Activated CD4-positive, alpha-beta memory T cell treated with anti-CD3 and anti-CD28 coated beads for 36 hours (primary cell): ENCODE measurements at regions of chr22 and their contacts with region 1.

Region 1: DNA sequence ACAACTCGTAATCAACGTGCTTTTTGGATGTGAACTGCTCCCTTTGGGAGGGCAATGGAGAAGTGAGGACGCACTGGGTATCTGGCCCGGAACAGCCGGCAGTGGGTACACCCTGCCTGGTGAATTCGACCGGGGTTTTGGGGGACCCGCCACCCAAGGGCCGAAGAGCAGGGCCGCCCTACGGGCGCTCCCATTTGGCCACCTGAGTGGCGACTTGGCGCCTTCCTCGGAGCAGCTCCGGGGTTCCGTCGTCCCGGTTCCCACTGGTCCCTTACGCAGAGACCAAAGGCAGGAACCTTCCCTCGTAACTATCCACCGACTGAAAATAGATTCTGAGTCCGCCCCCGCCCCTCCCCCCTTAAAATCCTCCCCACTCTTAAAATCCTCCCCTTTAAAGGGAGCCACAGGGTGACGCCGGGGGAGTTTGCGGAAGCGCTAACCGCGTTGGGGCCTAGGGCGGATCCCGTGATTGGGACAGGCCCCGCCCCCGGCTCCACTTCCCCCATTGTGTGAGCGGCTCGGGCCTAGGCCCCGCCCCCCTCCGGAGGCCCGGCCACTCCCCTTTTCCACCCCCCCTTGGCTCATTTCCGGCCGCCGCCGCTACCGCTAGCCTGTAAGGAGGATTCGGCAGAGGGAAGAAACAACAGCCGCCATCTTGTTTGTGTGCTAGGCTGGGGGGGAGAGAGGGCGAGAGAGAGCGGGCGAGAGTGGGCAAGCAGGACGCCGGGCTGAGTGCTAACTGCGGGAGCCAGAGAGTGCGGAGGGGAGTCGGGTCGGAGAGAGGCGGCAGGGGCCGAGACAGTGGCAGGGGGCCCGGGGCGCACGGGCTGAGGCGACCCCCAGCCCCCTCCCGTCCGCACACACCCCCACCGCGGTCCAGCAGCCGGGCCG is 1.0 kb upstream of the EP300 start:
- DNase-seq: peak; percentile 100
- H3K4me3 Mint-ChIP-seq: peak overlapping the region; percentile 93
- H3K27ac Mint-ChIP-seq: peak overlapping the region; percentile 98
- H3K4me1 Mint-ChIP-seq: peaks cover 25% of the 10 kb centered on the region
- H3K27me3 Mint-ChIP-seq: no peaks in the 10 kb centered on the region

Region 2: GRCh38 chr22:40636380-40637182 is 454.8 kb before region 1 on chr22 and contains the start of gene MRTFA:
- CTCF ChIA-PET with region 1: no interaction called
- POLR2A ChIA-PET with region 1: no interaction called
- intact Hi-C with region 1: loop called (anchors 1 kb)
- DNase-seq: peak; percentile 100
- H3K4me3 Mint-ChIP-seq: peak within 1 kb of the TSS; percentile 91
- H3K27ac Mint-ChIP-seq: peak within 1 kb of the TSS; percentile 89
- H3K4me1 Mint-ChIP-seq: peaks cover 40% of the 10 kb centered on the region
- H3K27me3 Mint-ChIP-seq: no peaks in the 10 kb centered on the region
- total RNA-seq, gene MRTFA: 44.1 to 45.5 TPM

Region 3: GRCh38 chr22:40950962-40951794 is 140.2 kb before region 1 on chr22 and contains the start of gene RBX1:
- CTCF ChIA-PET with region 1: interaction called, 15 read pairs
- POLR2A ChIA-PET with region 1: interaction called, 47 read pairs
- intact Hi-C with region 1: loop called (anchors 1 kb)
- DNase-seq: peak; percentile 99
- H3K4me3 Mint-ChIP-seq: peak within 1 kb of the TSS; percentile 99
- H3K27ac Mint-ChIP-seq: peak within 1 kb of the TSS; percentile 99
- H3K4me1 Mint-ChIP-seq: peaks cover 30% of the 10 kb centered on the region
- H3K27me3 Mint-ChIP-seq: no peaks in the 10 kb centered on the region
- total RNA-seq, gene RBX1: 96.9 to 99.4 TPM

Region 4: DNA sequence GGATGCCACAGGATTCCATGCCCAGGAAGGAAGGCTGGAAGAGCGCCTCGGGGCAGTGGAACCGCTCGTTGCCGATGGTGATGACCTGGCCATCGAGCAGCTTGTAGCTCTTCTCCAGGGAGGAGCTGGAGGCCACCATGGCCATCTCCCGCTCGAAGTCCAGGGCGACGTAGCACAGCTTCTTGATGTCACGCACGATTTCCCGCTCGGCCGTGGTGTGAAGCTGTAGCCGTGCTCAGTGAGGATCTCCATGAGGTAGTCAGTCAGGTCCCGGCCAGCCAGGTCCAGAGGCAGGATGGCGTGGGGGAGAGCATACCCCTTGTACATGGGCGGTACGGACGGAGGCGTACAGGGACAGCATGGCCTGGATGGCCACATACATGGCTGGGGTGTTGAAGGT is 16.9 kb before region 1 on chr22:
- CTCF ChIA-PET with region 1: no interaction called
- POLR2A ChIA-PET with region 1: no interaction called
- intact Hi-C with region 1: no loop called
- DNase-seq: no peak
- H3K4me3 Mint-ChIP-seq: no peak overlapping the region
- H3K27ac Mint-ChIP-seq: no peak overlapping the region
- H3K4me1 Mint-ChIP-seq: no peaks in the 10 kb centered on the region
- H3K27me3 Mint-ChIP-seq: peaks cover 2% of the 10 kb centered on the region

Region 5: GRCh38 chr22:41106122-41106968 is 15.0 kb after region 1 on chr22:
- CTCF ChIA-PET with region 1: interaction called, 12 read pairs
- POLR2A ChIA-PET with region 1: interaction called, 11 read pairs
- intact Hi-C with region 1: no loop called
- DNase-seq: peak; percentile 38
- H3K4me3 Mint-ChIP-seq: no peak overlapping the region
- H3K27ac Mint-ChIP-seq: peak overlapping the region; percentile 59
- H3K4me1 Mint-ChIP-seq: peaks cover 59% of the 10 kb centered on the region
- H3K27me3 Mint-ChIP-seq: no peaks in the 10 kb centered on the region

Region 6: GRCh38 chr22:41274856-41275255 is 183.5 kb after region 1 on chr22:
- CTCF ChIA-PET with region 1: no interaction called
- POLR2A ChIA-PET with region 1: no interaction called
- intact Hi-C with region 1: no loop called
- DNase-seq: no peak
- H3K4me3 Mint-ChIP-seq: no peak overlapping the region
- H3K27ac Mint-ChIP-seq: no peak overlapping the region
- H3K4me1 Mint-ChIP-seq: peaks cover 5% of the 10 kb centered on the region
- H3K27me3 Mint-ChIP-seq: no peaks in the 10 kb centered on the region